Left ventricle myocardium inferior (tissue), 1 donor: ENCODE measurements at regions of chr4 and their contacts with region 1.

Region 1: GRCh38 chr4:174764105-174764729 is 64.8 kb downstream of the GLRA3 start:
- DNase-seq: no peak
- H3K4me3 ChIP-seq: no peak overlapping the region
- H3K27ac ChIP-seq: no peak overlapping the region
- H3K4me1 ChIP-seq: no peaks in the 10 kb centered on the region
- H3K27me3 ChIP-seq: no peaks in the 10 kb centered on the region
- CTCF ChIP-seq: peak; percentile 62

Region 2: DNA sequence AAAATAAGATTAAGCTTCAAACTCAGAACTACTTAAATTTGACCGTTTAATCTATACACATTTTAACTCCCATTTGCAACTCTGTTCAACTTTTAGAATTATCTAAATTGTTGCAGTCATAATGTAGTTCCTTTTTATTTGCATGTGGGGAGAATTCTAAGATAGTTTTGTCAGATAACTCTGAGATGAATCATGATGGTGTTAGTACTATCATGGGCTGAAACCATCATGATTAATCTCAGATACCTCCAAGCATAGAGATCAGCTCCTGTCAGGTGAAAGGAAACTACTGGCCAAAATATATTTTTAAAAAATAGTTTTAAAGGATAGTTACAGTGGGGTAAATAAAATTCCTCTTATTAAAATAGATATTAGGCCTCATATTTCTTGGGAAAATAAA is 519.8 kb before region 1 on chr4:
- intact Hi-C with region 1: no loop called
- DNase-seq: no peak
- H3K4me3 ChIP-seq: no peak overlapping the region
- H3K27ac ChIP-seq: no peak overlapping the region
- H3K4me1 ChIP-seq: peaks cover 15% of the 10 kb centered on the region
- H3K27me3 ChIP-seq: no peaks in the 10 kb centered on the region
- CTCF ChIP-seq: no peak

Region 3: DNA sequence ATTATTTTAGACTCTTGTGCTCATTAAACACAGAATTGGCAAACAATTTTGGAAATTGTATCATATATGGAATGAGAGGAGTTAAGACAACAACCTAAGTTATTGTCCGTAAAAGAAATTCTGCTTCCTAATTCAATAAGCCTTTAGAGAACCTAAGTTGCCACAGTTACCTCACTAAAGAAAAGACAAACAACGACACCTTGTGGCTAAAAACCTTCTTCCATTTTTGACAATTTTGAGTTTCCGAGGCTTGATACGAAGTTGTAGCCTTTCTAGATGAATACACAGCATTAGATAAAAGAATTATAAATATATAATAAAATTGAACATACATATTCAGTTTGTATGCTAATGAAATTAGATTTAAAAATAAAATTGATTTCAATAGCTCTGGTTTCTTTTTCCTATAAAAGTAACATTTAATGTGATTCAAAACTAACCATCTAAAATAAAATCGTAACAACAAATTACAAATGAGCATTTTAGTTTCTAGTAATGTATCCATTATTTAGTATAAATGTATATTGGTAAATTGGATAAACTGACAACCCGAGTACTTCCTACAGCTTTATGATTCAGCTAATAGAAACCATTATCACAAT is 772.7 kb after region 1 on chr4:
- intact Hi-C with region 1: loop called (anchors 5 kb)
- DNase-seq: no peak
- H3K4me3 ChIP-seq: no peak overlapping the region
- H3K27ac ChIP-seq: no peak overlapping the region
- H3K4me1 ChIP-seq: no peaks in the 10 kb centered on the region
- H3K27me3 ChIP-seq: no peaks in the 10 kb centered on the region
- CTCF ChIP-seq: peak; percentile 56